CD4-positive, alpha-beta memory T cell (primary cell): ENCODE measurements at regions of chr10 and their contacts with region 1.

Region 1: DNA sequence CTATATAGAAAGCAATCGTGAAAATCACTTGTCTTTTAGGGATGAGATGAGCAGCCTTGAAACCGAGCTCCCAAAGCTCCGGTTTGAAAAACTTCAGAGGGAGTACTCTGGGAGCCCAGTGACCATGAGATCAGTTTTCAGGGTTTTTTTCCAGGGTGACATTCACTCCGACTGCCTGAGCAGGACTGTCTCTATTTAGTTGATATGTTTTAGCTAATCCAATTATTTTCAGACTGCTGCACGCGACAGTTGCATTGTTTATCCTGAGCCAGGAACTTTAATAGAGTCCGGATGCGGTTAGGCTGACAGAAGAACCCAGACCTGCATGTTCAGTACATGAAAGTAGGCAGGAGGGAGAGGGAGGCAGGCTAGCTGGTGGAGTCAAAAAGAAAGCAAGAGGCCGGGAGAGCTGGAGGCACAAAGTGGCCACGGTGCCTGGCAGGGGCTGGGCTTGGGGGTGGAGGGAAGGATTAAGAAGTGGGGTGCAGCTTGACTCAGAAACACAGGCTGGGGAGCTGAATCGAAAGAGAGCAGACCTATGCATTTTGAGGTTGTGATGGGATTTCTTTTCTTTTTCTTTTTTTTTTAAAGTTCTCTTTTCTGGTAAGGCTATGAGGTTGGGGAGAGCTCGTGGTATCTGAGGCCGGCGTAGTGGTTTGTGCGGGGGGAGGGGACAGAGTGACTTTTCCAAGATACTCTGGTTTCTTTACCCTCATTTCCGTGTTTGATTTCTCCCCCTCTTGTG is 5.6 kb downstream of the GATA3 start:
- DNase-seq: peak; percentile 73 to 84 (median 76)
- H3K4me3 ChIP-seq: peak overlapping the region; percentile 57 to 58
- H3K4me3 Mint-ChIP-seq: peak overlapping the region; percentile 94 to 100 (median 98)
- H3K27ac ChIP-seq: peak overlapping the region; percentile 83
- H3K27ac Mint-ChIP-seq: peak overlapping the region; percentile 93 to 99 (median 97)
- H3K4me1 ChIP-seq: peaks cover 77% of the 10 kb centered on the region
- H3K4me1 Mint-ChIP-seq: peaks cover 46 to 86% (median 70%) of the 10 kb centered on the region in 4 donors
- H3K27me3 ChIP-seq: no peaks in the 10 kb centered on the region
- H3K27me3 Mint-ChIP-seq: no peaks in the 10 kb centered on the region

Region 2: GRCh38 chr10:7672341-7673134 is 387.6 kb before region 1 on chr10:
- CTCF ChIA-PET with region 1: no interaction called
- POLR2A ChIA-PET with region 1: no interaction called
- intact Hi-C with region 1: no loop called
- DNase-seq: no peak
- H3K4me3 ChIP-seq: no peak overlapping the region
- H3K4me3 Mint-ChIP-seq: no peak overlapping the region
- H3K27ac ChIP-seq: no peak overlapping the region
- H3K27ac Mint-ChIP-seq: no peak overlapping the region
- H3K4me1 ChIP-seq: no peaks in the 10 kb centered on the region
- H3K4me1 Mint-ChIP-seq: peaks cover 2 to 9% (median 4%) of the 10 kb centered on the region in 4 donors
- H3K27me3 ChIP-seq: peaks cover 4% of the 10 kb centered on the region
- H3K27me3 Mint-ChIP-seq: peaks cover 42 to 57% of the 10 kb centered on the region in 2 donors

Region 3: DNA sequence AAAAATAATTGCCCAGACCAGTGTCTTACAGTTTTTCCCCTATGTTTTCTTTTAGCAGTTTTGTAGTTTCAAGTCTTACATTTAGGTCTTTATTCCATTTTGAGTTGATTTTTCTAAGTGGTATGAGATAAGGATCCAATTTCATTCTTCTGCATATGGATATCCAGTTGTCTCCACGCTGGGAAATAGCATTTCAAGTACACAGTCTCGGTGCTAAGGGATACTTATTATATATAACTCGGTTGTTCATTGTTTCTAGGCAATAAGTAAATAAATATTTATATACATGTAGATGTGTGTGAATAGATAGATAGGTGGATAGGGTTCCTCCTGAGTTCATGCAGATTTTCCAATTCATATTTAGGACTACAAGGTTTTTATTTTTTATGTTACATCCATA is 225.9 kb before region 1 on chr10:
- CTCF ChIA-PET with region 1: no interaction called
- POLR2A ChIA-PET with region 1: no interaction called
- intact Hi-C with region 1: no loop called
- DNase-seq: no peak
- H3K4me3 ChIP-seq: no peak overlapping the region
- H3K4me3 Mint-ChIP-seq: peak overlapping the region in 2 of 8 donors; percentile 27 to 43
- H3K27ac ChIP-seq: no peak overlapping the region
- H3K27ac Mint-ChIP-seq: no peak overlapping the region
- H3K4me1 ChIP-seq: no peaks in the 10 kb centered on the region
- H3K4me1 Mint-ChIP-seq: peaks cover 35 to 70% (median 54%) of the 10 kb centered on the region in 4 donors
- H3K27me3 ChIP-seq: no peaks in the 10 kb centered on the region
- H3K27me3 Mint-ChIP-seq: no peaks in the 10 kb centered on the region

Region 4: GRCh38 chr10:7986851-7987250 is 73.3 kb before region 1 on chr10:
- CTCF ChIA-PET with region 1: no interaction called
- POLR2A ChIA-PET with region 1: no interaction called
- intact Hi-C with region 1: no loop called
- DNase-seq: no peak
- H3K4me3 ChIP-seq: no peak overlapping the region
- H3K4me3 Mint-ChIP-seq: no peak overlapping the region
- H3K27ac ChIP-seq: no peak overlapping the region
- H3K27ac Mint-ChIP-seq: no peak overlapping the region
- H3K4me1 ChIP-seq: no peaks in the 10 kb centered on the region
- H3K4me1 Mint-ChIP-seq: no peaks in the 10 kb centered on the region
- H3K27me3 ChIP-seq: no peaks in the 10 kb centered on the region
- H3K27me3 Mint-ChIP-seq: no peaks in the 10 kb centered on the region

Region 5: GRCh38 chr10:8073691-8074391 is 13.7 kb after region 1 on chr10:
- CTCF ChIA-PET with region 1: interaction called, 6 read pairs
- POLR2A ChIA-PET with region 1: interaction called, 100 read pairs
- intact Hi-C with region 1: no loop called
- DNase-seq: no peak
- H3K4me3 ChIP-seq: no peak overlapping the region
- H3K4me3 Mint-ChIP-seq: peak overlapping the region in 2 of 8 donors; percentile 20 to 47
- H3K27ac ChIP-seq: no peak overlapping the region
- H3K27ac Mint-ChIP-seq: peak overlapping the region in 5 of 7 donors; percentile 27 to 96 (median 73)
- H3K4me1 ChIP-seq: peaks cover 43% of the 10 kb centered on the region
- H3K4me1 Mint-ChIP-seq: peaks cover 32 to 64% (median 43%) of the 10 kb centered on the region in 4 donors
- H3K27me3 ChIP-seq: no peaks in the 10 kb centered on the region
- H3K27me3 Mint-ChIP-seq: no peaks in the 10 kb centered on the region

Region 6: DNA sequence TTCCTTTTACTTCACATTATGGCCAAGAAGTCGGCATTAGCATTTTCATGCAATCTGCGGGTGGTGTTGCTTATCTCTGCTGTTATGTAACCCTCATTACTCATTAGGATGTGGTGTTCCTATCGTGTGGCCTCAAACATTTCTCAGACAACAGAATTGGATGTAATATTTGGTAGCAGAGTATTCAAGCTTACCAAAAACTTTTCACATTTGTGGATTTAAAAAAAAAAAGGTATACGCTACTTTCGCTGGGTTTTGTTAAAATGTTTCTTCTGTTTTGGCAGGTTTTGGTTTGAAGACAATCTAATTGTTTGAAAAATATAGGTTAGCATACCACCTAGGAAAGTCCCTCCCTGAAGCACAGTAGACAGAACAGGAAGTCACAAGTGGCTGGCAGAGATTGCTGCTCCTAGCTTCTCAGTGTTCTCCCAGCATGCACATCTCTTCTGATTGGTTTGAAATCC is 123.1 kb after region 1 on chr10:
- CTCF ChIA-PET with region 1: interaction called, 4 read pairs
- POLR2A ChIA-PET with region 1: interaction called, 40 read pairs
- intact Hi-C with region 1: loop called (anchors 2 kb)
- DNase-seq: peak; percentile 64 to 83 (median 76)
- H3K4me3 ChIP-seq: no peak overlapping the region
- H3K4me3 Mint-ChIP-seq: peak overlapping the region; percentile 57 to 86 (median 64)
- H3K27ac ChIP-seq: peak overlapping the region; percentile 60
- H3K27ac Mint-ChIP-seq: peak overlapping the region; percentile 87 to 98 (median 90)
- H3K4me1 ChIP-seq: peaks cover 34% of the 10 kb centered on the region
- H3K4me1 Mint-ChIP-seq: peaks cover 23 to 44% (median 35%) of the 10 kb centered on the region in 4 donors
- H3K27me3 ChIP-seq: no peaks in the 10 kb centered on the region
- H3K27me3 Mint-ChIP-seq: no peaks in the 10 kb centered on the region

Region 7: DNA sequence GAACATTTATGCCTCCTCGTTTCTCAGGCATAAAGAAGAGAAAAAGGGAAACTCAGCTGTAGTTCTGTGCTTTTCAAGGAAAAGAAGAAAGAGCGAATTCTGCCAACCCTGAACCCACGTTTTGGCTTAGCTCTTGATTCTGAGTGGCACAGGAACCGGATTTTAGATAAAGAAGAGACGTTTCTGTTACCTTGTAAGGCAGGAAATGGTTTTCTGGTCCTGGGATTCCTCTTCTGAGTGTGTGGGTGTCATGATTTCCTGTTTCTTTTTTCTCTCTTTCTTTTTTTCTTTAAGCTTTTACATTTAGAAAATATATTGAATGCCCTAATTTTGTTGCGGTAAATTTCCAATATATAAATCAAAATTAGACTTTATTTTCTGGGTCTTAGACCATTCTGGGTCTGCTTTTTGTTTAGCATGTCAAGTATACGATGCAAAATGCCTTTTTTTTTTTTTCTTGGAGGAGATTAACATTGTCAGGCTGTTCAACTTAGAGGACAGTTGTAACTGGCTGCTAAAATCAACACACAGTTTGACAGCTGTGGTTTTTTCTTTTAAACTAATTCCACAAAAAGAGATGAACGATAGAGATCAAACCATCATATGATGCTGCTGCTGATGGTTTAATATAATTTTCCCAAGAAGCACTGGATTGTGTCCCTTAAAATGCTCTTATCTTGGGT is 185.1 kb after region 1 on chr10:
- CTCF ChIA-PET with region 1: no interaction called
- POLR2A ChIA-PET with region 1: interaction called, 19 read pairs
- intact Hi-C with region 1: loop called (anchors 2 kb)
- DNase-seq: peak in 4 of 5 donors; percentile 55 to 64 (median 59)
- H3K4me3 ChIP-seq: peak overlapping the region in 1 of 2 donors; percentile 34
- H3K4me3 Mint-ChIP-seq: peak overlapping the region; percentile 51 to 90 (median 74)
- H3K27ac ChIP-seq: peak overlapping the region; percentile 41
- H3K27ac Mint-ChIP-seq: peak overlapping the region; percentile 75 to 95 (median 93)
- H3K4me1 ChIP-seq: peaks cover 52% of the 10 kb centered on the region
- H3K4me1 Mint-ChIP-seq: peaks cover 39 to 74% (median 55%) of the 10 kb centered on the region in 4 donors
- H3K27me3 ChIP-seq: no peaks in the 10 kb centered on the region
- H3K27me3 Mint-ChIP-seq: no peaks in the 10 kb centered on the region

Region 8: DNA sequence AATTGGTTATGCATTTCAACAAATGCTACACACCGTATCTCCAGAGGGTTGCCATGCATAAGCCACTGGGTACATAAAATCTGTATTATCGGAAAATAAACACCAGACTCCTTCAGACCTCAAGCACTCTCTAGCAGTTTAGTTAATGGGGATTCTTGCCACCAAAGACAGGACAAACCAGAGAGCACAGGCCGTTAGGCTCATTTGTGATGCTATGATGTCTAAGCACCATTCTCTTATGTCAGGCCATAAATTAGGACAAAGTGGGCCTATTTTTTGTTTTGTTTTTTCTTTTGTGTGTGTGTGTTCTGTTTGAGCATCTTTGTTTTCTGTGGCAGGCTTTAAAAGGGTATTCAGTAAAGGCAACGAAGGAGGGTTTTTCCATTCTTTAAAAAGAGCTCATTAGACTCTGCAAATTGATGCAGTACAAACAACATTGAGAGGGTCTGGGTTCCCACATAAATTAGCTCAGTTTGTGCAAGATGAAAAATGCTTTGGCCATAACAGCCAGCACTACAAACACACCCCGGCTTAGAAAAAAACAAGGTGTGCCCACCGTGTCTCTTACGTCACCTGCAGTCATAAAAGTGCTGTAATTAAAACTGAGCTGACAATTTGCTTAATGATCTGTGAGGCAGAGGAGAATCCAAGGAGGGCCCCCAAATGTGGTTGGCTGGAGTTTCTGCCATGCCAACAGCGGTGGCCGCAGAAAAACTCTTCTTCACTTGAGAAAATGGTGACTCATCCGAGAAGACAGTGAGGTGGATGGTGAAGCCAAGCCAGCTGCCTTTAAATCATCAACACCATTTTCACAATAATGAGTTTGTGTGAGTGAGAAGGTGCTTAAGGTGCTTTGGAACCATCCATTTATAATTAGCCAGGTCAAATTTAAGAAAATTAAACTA is 292.3 kb after region 1 on chr10:
- CTCF ChIA-PET with region 1: no interaction called
- POLR2A ChIA-PET with region 1: no interaction called
- intact Hi-C with region 1: no loop called
- DNase-seq: no peak
- H3K4me3 ChIP-seq: no peak overlapping the region
- H3K4me3 Mint-ChIP-seq: no peak overlapping the region
- H3K27ac ChIP-seq: no peak overlapping the region
- H3K27ac Mint-ChIP-seq: no peak overlapping the region
- H3K4me1 ChIP-seq: no peaks in the 10 kb centered on the region
- H3K4me1 Mint-ChIP-seq: peaks cover 3 to 6% (median 4%) of the 10 kb centered on the region in 4 donors
- H3K27me3 ChIP-seq: no peaks in the 10 kb centered on the region
- H3K27me3 Mint-ChIP-seq: peaks cover 0 to 5% of the 10 kb centered on the region in 2 donors

Region 9: DNA sequence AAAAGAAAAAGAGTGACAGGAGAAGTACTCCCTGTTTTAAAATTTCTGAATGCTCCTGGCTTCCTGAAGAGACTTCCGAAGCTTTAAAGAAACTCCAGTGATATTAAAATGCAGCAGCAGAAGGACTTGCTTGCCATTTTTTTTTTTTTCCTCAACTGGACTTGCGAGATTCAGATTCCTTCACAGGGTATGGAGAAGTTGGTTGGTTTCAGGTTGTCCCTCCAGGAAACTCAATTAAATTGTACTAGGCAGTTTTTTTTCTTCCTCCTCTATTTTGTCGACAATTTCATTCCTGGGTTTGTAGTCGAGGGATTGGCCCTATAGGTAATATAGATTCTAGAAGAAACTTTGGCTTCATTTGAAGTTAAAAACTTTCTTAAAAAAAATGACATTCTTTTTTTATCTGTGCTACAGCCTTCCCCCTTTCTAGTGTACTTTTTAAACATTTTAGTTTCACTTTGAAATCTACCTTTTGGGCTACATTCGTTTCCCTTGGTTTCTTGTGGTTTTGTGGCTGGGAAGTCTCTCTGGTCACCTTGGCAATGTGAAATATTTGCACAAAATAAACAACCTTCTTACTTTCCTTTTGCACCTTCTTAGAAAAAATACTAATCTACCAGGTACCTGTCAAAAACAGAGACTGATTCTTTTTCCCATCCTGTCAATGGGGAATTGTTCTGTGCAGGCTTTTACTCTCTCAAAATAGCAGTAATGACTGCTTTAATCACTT is 344.4 kb after region 1 on chr10:
- CTCF ChIA-PET with region 1: interaction called, 9 read pairs
- POLR2A ChIA-PET with region 1: interaction called, 46 read pairs
- intact Hi-C with region 1: loop called (anchors 2 kb)
- DNase-seq: peak; percentile 82 to 95 (median 92)
- H3K4me3 ChIP-seq: peak overlapping the region; percentile 12 to 34
- H3K4me3 Mint-ChIP-seq: peak overlapping the region; percentile 56 to 84 (median 78)
- H3K27ac ChIP-seq: peak overlapping the region; percentile 95
- H3K27ac Mint-ChIP-seq: peak overlapping the region; percentile 92 to 100 (median 98)
- H3K4me1 ChIP-seq: peaks cover 87% of the 10 kb centered on the region
- H3K4me1 Mint-ChIP-seq: peaks cover 71 to 91% (median 82%) of the 10 kb centered on the region in 4 donors
- H3K27me3 ChIP-seq: no peaks in the 10 kb centered on the region
- H3K27me3 Mint-ChIP-seq: no peaks in the 10 kb centered on the region

Region 10: DNA sequence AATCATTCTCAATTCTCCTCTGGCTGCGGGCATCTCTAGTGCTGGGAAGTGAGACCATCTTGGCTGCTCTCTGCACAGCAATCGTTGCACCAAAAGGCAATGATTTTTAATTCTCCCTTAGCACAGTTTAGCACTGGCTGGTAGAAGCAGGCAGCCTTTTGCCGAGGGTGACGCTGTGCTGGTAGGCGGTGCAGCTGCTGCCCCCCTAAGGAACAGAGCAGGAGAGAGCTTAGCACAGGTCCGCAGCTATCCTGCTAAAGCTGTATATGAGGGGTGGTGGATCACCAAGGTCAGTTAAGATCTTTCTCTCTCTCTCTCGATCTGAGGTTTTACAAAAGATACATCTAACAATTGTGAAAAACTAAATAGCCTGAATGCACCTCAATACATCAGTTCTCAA is 384.5 kb after region 1 on chr10:
- CTCF ChIA-PET with region 1: interaction called, 13 read pairs
- POLR2A ChIA-PET with region 1: interaction called, 8 read pairs
- intact Hi-C with region 1: no loop called
- DNase-seq: peak in 4 of 5 donors; percentile 21 to 35 (median 26)
- H3K4me3 ChIP-seq: no peak overlapping the region
- H3K4me3 Mint-ChIP-seq: no peak overlapping the region
- H3K27ac ChIP-seq: no peak overlapping the region
- H3K27ac Mint-ChIP-seq: peak overlapping the region in 3 of 7 donors; percentile 12 to 65 (median 24)
- H3K4me1 ChIP-seq: peaks cover 6% of the 10 kb centered on the region
- H3K4me1 Mint-ChIP-seq: peaks cover 5 to 19% (median 12%) of the 10 kb centered on the region in 4 donors
- H3K27me3 ChIP-seq: no peaks in the 10 kb centered on the region
- H3K27me3 Mint-ChIP-seq: no peaks in the 10 kb centered on the region

Region 11: DNA sequence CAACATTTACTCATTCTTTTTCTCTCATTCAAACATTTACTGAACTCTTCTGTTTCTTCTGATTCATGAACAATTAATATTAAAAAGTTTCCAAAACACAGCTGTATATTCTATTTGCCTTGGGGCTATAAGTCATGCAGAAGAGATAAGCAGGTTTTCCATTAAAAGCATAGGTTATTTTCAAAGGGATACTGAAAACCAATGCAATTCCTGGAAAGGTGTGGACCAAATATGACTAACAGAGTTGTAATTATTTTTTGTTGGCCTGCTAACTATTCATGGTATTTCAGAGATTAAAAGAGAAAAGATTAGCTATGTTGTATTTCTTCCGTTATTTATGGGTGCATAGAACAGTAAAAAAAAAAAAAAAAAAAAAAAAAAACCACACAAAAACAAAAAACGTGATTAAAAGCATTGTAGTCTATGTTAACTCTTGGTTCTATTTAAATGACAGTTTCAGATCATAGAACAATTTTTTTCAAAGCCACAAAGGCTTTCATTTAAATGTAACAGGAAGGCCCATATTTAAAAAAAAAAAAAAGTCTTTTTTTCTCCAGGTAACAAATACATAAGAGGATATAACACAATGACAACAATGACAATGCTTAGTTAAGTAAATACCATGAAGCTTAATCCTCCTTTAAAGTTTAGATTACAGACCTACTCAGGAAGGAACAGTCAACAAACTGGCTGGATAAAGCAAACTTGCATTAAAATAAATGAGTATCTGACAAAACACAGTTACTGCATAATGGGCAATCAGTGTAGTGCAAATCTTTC is 1037.3 kb after region 1 on chr10:
- CTCF ChIA-PET with region 1: no interaction called
- POLR2A ChIA-PET with region 1: interaction called, 6 read pairs
- intact Hi-C with region 1: loop called (anchors 2 kb)
- DNase-seq: peak in 4 of 5 donors; percentile 71 to 82 (median 77)
- H3K4me3 ChIP-seq: no peak overlapping the region
- H3K4me3 Mint-ChIP-seq: peak overlapping the region in 6 of 8 donors; percentile 12 to 67 (median 47)
- H3K27ac ChIP-seq: no peak overlapping the region
- H3K27ac Mint-ChIP-seq: peak overlapping the region; percentile 77 to 95 (median 88)
- H3K4me1 ChIP-seq: peaks cover 33% of the 10 kb centered on the region
- H3K4me1 Mint-ChIP-seq: peaks cover 17 to 30% (median 25%) of the 10 kb centered on the region in 4 donors
- H3K27me3 ChIP-seq: no peaks in the 10 kb centered on the region
- H3K27me3 Mint-ChIP-seq: peaks cover 0 to 2% of the 10 kb centered on the region in 2 donors